ENCODE measurements at regions of chr11 and their contacts with region 1.

Region 1: GRCh38 chr11:77047007-77047927 is 13.1 kb downstream of the B3GNT6 start:
- DNase-seq: peak; percentile 90
- ATAC-seq: peak; percentile 81
- H3K4me3 ChIP-seq: peak overlapping the region; percentile 29 to 45
- H3K27ac ChIP-seq: peak overlapping the region; percentile 15; the same call in 1 of the 2 replicates
- H3K4me1 ChIP-seq: peaks cover 2 to 20% of the 10 kb centered on the region in 2 experiments; a peak in 3 of 4 replicates
- H3K27me3 ChIP-seq: no peaks in the 10 kb centered on the region
- CTCF ChIP-seq: peak; percentile 67 to 88 (median 68)
- POLR2A ChIP-seq: no peak
- RAD21 ChIP-seq: peak; percentile 73

Region 2: GRCh38 chr11:76700177-76701100 is 346.8 kb before region 1 on chr11:
- CTCF ChIA-PET with region 1: no interaction called
- POLR2A ChIA-PET with region 1: no interaction called
- RAD21 ChIA-PET with region 1: no interaction called
- intact Hi-C with region 1: no loop called
- DNase-seq: peak; percentile 79
- ATAC-seq: peak; percentile 79
- H3K4me3 ChIP-seq: peak overlapping the region; percentile 6 to 38
- H3K27ac ChIP-seq: peak overlapping the region; percentile 68
- H3K4me1 ChIP-seq: peaks cover 41 to 54% of the 10 kb centered on the region in 2 experiments
- H3K27me3 ChIP-seq: no peaks in the 10 kb centered on the region
- CTCF ChIP-seq: no peak
- POLR2A ChIP-seq: no peak
- RAD21 ChIP-seq: no peak

Region 3: GRCh38 chr11:76807206-76807875 is 239.9 kb before region 1 on chr11:
- CTCF ChIA-PET with region 1: interaction called, 3 read pairs
- POLR2A ChIA-PET with region 1: no interaction called
- RAD21 ChIA-PET with region 1: interaction called in 1 of 2 experiments, 3 read pairs
- intact Hi-C with region 1: loop called (anchors 1 kb)
- DNase-seq: no peak
- ATAC-seq: peak; percentile 93
- H3K4me3 ChIP-seq: no peak overlapping the region
- H3K27ac ChIP-seq: no peak overlapping the region
- H3K4me1 ChIP-seq: peaks cover 0 to 3% of the 10 kb centered on the region in 2 experiments; a peak in 2 of 4 replicates
- H3K27me3 ChIP-seq: no peaks in the 10 kb centered on the region
- CTCF ChIP-seq: peak; percentile 77 to 83 (median 82)
- POLR2A ChIP-seq: no peak
- RAD21 ChIP-seq: peak; percentile 73

Region 4: DNA sequence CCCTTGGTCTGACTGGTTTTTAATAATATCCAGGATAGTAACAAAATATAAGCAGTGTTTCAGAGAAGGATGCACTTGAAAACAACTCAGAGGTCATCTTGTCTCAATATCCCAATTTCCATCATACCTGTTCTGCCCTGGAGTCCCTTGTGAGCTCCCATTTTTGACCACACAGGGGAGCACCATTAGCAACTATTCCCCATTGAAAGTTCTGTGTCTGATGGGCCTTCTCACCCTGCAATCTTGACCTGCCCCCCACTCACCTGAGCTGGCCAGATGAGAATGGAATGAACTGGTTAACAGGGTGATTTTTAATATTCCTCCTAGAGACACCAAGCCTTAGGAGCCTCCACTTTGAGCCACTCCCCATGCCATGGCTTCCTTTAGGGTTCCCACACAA is 15.7 kb after region 1 on chr11:
- CTCF ChIA-PET with region 1: interaction called, 13 read pairs
- POLR2A ChIA-PET with region 1: interaction called, 11 read pairs
- RAD21 ChIA-PET with region 1: no interaction called
- intact Hi-C with region 1: no loop called
- DNase-seq: no peak
- ATAC-seq: no peak
- H3K4me3 ChIP-seq: no peak overlapping the region
- H3K27ac ChIP-seq: no peak overlapping the region
- H3K4me1 ChIP-seq: peaks cover 7 to 16% of the 10 kb centered on the region in 2 experiments; a peak in 2 of 4 replicates
- H3K27me3 ChIP-seq: no peaks in the 10 kb centered on the region
- CTCF ChIP-seq: peak; percentile 14 to 61 (median 42); a peak in 2 of 6 replicates
- POLR2A ChIP-seq: no peak
- RAD21 ChIP-seq: no peak

Region 5: GRCh38 chr11:77113382-77114088 is 66.3 kb after region 1 on chr11:
- CTCF ChIA-PET with region 1: interaction called, 14 read pairs
- POLR2A ChIA-PET with region 1: no interaction called
- RAD21 ChIA-PET with region 1: interaction called, 3 to 4 read pairs
- intact Hi-C with region 1: loop called (anchors 1 kb)
- DNase-seq: no peak
- ATAC-seq: peak; percentile 61
- H3K4me3 ChIP-seq: no peak overlapping the region
- H3K27ac ChIP-seq: peak overlapping the region; percentile 11; the same call in 1 of the 2 replicates
- H3K4me1 ChIP-seq: peaks cover 25 to 41% of the 10 kb centered on the region in 2 experiments
- H3K27me3 ChIP-seq: no peaks in the 10 kb centered on the region
- CTCF ChIP-seq: peak; percentile 83 to 94 (median 84)
- POLR2A ChIP-seq: no peak
- RAD21 ChIP-seq: peak; percentile 84

Region 6: DNA sequence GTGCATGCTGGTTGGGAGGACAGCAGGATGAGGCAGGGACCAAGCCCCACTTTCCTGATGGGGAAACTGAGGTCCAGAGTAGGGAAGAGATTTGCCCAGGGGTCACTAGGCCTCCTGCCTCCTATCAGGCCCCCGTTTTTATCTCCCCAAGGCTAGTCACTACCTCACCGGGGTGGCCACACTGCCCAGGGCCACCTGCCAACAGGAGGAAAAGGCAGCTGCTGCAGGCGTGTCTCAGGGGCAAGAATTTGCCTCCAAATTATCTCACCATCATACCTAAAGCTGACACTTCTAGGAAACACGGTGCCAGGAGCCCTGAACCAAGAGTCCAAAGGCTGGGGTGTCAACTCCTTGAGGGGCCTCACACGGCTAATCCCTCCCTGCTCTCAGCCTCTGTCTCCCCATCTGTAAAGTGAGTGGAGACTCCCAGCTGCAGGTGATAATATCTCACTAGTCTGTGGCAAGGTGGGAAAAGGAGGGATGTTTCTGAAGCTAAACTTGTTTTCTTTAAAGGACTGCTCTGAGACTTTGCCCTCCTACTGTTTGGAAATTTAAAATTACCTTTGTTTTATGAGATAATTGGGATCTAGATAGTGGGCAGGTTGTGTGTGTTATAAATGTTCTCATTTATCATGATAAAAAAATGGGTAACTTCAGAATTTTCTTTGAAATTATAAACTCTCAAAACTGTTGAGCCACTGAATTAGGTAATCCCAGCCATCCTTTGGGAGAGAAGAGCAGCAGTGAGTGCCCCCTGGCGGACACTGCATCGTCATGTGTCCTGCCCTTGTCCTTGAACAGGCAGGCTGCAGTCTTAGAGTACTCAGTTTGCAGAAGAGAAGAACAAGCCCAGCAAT is 140.7 kb after region 1 on chr11:
- CTCF ChIA-PET with region 1: interaction called, 31 read pairs
- POLR2A ChIA-PET with region 1: no interaction called
- RAD21 ChIA-PET with region 1: interaction called in 1 of 2 experiments, 3 read pairs
- intact Hi-C with region 1: loop called (anchors 1 kb)
- DNase-seq: peak; percentile 54
- ATAC-seq: peak; percentile 54
- H3K4me3 ChIP-seq: no peak overlapping the region
- H3K27ac ChIP-seq: no peak overlapping the region
- H3K4me1 ChIP-seq: peaks cover 0 to 14% of the 10 kb centered on the region in 2 experiments; a peak in 3 of 4 replicates
- H3K27me3 ChIP-seq: no peaks in the 10 kb centered on the region
- CTCF ChIP-seq: peak; percentile 95 to 98 (median 96)
- POLR2A ChIP-seq: no peak
- RAD21 ChIP-seq: peak; percentile 88